WTC11 (cell line): ENCODE measurements at regions of chr11 and their contacts with region 1.

Region 1: DNA sequence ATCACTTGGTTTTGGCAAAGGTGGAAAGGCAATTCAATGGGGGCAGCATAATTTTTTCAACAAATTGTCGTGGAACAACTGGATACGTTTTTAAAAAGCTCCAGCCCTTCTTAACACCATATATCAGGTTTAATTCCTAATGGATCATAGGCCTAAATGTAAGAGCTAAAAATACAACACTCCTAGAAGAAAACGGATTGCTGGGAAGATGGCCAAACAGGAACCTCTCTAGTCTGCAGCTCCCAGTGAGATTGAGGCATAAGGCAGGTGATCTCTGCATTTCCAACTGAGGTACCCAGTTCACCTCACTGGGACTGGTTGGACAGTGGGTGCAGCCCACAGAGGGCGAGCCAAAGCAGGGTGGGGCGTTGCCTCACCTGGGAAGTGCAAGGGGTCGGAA is 32.4 kb upstream of the SCGB1D1 start:
- DNase-seq: no peak
- ATAC-seq: no peak
- H3K4me3 Mint-ChIP-seq: no peak overlapping the region
- H3K27ac Mint-ChIP-seq: no peak overlapping the region
- H3K4me1 Mint-ChIP-seq: no peaks in the 10 kb centered on the region
- H3K27me3 Mint-ChIP-seq: peaks cover 23% of the 10 kb centered on the region
- CTCF ChIP-seq: no peak

Region 2: GRCh38 chr11:61999141-61999975 is 158.2 kb before region 1 on chr11:
- CTCF ChIA-PET with region 1: no interaction called
- POLR2A ChIA-PET with region 1: no interaction called
- DNase-seq: no peak
- ATAC-seq: no peak; the same call in none of the 2 replicates
- H3K4me3 Mint-ChIP-seq: no peak overlapping the region
- H3K27ac Mint-ChIP-seq: peak overlapping the region; percentile 94
- H3K4me1 Mint-ChIP-seq: peaks cover 19% of the 10 kb centered on the region
- H3K27me3 Mint-ChIP-seq: no peaks in the 10 kb centered on the region; the same call in none of the 2 replicates
- CTCF ChIP-seq: no peak

Region 3: GRCh38 chr11:62172294-62172693 is 14.7 kb after region 1 on chr11:
- CTCF ChIA-PET with region 1: interaction called, 12 read pairs
- POLR2A ChIA-PET with region 1: no interaction called
- DNase-seq: no peak
- ATAC-seq: no peak
- H3K4me3 Mint-ChIP-seq: no peak overlapping the region
- H3K27ac Mint-ChIP-seq: no peak overlapping the region
- H3K4me1 Mint-ChIP-seq: 0 out of 2 replicates have a peak, but pooled peaks cover 3% of the 10 kb centered on the region
- H3K27me3 Mint-ChIP-seq: peaks cover 11% of the 10 kb centered on the region
- CTCF ChIP-seq: no peak

Region 4: DNA sequence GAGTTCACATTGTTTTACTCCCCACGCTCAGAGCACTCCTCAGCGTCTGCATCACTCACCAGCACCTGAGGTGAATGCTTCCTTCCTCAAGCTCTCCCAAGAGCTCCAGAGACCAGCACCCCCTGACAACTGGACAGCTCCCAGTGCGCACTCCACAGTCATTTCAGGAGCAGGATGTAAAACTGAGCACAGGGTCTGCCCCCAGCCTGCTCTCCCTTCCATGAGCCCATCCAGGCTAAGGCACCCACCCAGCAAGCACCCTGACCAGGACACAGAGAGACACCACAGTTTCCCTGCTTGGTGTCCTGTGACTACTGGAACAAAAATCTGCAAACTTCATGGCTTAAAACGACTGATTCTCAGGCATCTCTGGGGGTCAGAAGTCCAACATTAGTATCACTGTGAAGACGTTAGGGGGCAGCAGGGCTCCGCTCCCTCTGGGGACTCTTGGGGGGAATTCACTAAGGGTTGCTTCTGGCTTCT is 87.7 kb after region 1 on chr11:
- CTCF ChIA-PET with region 1: no interaction called
- POLR2A ChIA-PET with region 1: no interaction called
- DNase-seq: peak; percentile 73
- ATAC-seq: peak; percentile 84
- H3K4me3 Mint-ChIP-seq: no peak overlapping the region
- H3K27ac Mint-ChIP-seq: no peak overlapping the region
- H3K4me1 Mint-ChIP-seq: peaks cover 7% of the 10 kb centered on the region
- H3K27me3 Mint-ChIP-seq: peaks cover 13% of the 10 kb centered on the region
- CTCF ChIP-seq: no peak

Region 5: DNA sequence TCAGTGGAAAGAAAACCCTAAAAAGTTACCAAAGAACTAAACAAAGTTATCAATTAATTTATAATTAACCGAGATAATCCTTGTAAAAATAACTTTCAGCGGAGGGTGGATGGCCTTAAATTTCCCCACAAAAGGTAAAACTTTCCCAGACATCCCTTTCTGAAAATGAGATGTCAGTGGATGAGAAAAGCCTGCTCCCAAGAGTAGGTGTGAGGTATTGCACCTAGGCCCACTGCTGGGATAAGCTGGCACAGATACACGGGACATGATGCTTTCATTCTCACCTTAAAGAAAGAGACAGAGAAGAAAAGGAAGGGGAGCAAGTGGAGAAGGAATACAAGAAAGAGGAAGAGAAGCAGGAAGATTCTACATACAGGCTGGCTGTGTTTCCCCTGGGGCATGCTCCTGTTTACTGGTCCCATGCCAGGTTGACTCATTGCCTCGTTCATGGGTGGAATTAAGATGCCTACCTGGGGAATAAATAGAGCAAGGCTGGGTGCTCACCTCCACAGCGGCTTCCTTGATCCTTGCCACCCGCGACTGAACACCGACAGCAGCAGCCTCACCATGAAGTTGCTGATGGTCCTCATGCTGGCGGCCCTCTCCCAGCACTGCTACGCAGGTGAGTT is 112.2 kb after region 1 on chr11 and contains the start of gene SCGB2A2:
- CTCF ChIA-PET with region 1: no interaction called
- POLR2A ChIA-PET with region 1: no interaction called
- DNase-seq: no peak
- ATAC-seq: peak; percentile 71; the same call in 1 of the 2 replicates
- H3K4me3 Mint-ChIP-seq: no peak within 1 kb of the TSS
- H3K27ac Mint-ChIP-seq: no peak within 1 kb of the TSS
- H3K4me1 Mint-ChIP-seq: peaks cover 7% of the 10 kb centered on the region; the same call in 1 of the 2 replicates
- H3K27me3 Mint-ChIP-seq: no peaks in the 10 kb centered on the region
- CTCF ChIP-seq: peak; percentile 22; the same call in 1 of the 2 replicates
- total RNA-seq, gene SCGB2A2: not detected in 3 replicates